ENCODE measurements at regions of chr14 and their contacts with region 1.

Region 1: GRCh38 chr14:73503648-73504047 is 12.9 kb downstream of the RIOX1 start:
- DNase-seq: peak; percentile 14
- H3K4me3 Mint-ChIP-seq: no peak overlapping the region
- H3K27ac Mint-ChIP-seq: no peak overlapping the region
- H3K4me1 Mint-ChIP-seq: no peaks in the 10 kb centered on the region
- H3K27me3 Mint-ChIP-seq: no peaks in the 10 kb centered on the region

Region 2: DNA sequence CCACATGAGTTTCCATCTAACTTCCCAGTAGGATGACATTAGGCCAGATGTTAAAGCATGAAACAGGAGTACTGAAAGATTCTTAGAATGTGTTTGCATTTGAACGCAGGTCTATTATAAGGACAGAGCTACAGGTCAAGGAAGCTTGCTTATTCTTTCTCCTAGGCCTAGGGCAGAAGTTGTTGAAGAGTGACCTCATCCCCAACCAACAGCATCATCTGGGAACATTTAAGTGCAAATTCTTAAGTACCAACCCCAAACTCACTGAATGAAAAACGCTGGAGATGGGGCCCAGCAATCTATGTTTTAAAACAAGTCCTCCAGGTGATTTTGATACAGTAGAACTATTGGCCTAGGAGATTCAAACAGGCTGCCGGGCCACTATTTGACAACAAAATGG is 213.9 kb before region 1 on chr14:
- CTCF ChIA-PET with region 1: no interaction called
- POLR2A ChIA-PET with region 1: no interaction called
- intact Hi-C with region 1: no loop called
- DNase-seq: no peak
- H3K4me3 Mint-ChIP-seq: no peak overlapping the region
- H3K27ac Mint-ChIP-seq: no peak overlapping the region
- H3K4me1 Mint-ChIP-seq: peaks cover 27% of the 10 kb centered on the region
- H3K27me3 Mint-ChIP-seq: no peaks in the 10 kb centered on the region

Region 3: GRCh38 chr14:73521229-73521628 is 17.6 kb after region 1 on chr14:
- CTCF ChIA-PET with region 1: interaction called, 21 read pairs
- POLR2A ChIA-PET with region 1: no interaction called
- intact Hi-C with region 1: no loop called
- DNase-seq: no peak
- H3K4me3 Mint-ChIP-seq: no peak overlapping the region
- H3K27ac Mint-ChIP-seq: no peak overlapping the region
- H3K4me1 Mint-ChIP-seq: no peaks in the 10 kb centered on the region
- H3K27me3 Mint-ChIP-seq: no peaks in the 10 kb centered on the region

Region 4: DNA sequence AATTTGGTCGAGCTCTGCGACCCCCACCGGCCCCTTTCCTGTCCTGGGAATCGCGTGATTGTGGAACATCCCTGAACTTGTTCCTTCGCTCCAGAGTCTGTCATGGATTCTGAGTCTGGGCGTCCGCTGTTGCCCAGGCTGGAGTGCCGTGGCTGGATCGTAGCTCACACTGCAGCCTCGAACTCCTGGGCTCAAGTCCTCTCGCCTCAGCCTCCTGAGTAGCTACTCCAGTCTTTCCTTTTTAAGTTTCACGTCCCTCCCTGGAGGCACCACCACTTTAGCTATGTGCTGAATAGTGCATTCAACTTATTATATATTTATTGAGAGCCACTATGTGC is 109.4 kb after region 1 on chr14:
- CTCF ChIA-PET with region 1: interaction called, 10 read pairs
- POLR2A ChIA-PET with region 1: no interaction called
- intact Hi-C with region 1: no loop called
- DNase-seq: no peak
- H3K4me3 Mint-ChIP-seq: peak overlapping the region; percentile 70
- H3K27ac Mint-ChIP-seq: no peak overlapping the region
- H3K4me1 Mint-ChIP-seq: peaks cover 3% of the 10 kb centered on the region
- H3K27me3 Mint-ChIP-seq: peaks cover 1% of the 10 kb centered on the region

Measured in activated CD4-positive, alpha-beta memory T cell treated with anti-CD3 and anti-CD28 coated beads for 36 hours (primary cell).